ENCODE measurements at regions of chr1 and their contacts with region 1.

Region 1: DNA sequence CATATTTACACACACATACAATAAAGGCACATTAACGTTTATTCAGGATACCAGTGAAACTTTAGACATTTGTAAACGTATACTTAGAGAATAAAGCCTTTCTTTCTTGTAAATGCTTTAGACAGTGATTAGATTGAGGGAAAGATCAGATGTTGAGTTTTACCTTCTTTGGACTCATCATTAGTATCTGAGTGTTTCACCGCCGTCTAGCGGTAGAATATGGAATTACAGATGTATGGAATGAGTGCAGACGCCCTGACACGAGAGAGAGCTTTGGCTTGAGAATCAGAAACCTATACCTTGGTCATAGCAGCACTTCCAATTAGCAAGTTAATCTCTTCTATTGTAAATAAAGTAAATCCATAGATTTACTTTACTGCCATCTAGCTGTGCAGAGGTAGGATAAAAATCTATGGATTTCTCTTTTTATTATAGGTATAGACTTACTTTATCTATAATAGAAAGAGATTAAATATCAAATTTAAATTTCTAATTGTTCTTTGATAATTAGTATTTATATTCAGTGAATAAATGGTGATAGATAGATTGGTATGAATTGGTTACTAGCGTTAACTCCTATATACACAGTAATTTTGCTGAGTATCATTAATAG is 12.6 kb downstream of the FLG2 start:
- DNase-seq: peak; percentile 60
- ATAC-seq: peak; percentile 73
- H3K4me3 Mint-ChIP-seq: no peak overlapping the region
- H3K27ac Mint-ChIP-seq: no peak overlapping the region
- H3K4me1 Mint-ChIP-seq: peaks cover 7% of the 10 kb centered on the region
- H3K27me3 Mint-ChIP-seq: peaks cover 22% of the 10 kb centered on the region

Region 2: DNA sequence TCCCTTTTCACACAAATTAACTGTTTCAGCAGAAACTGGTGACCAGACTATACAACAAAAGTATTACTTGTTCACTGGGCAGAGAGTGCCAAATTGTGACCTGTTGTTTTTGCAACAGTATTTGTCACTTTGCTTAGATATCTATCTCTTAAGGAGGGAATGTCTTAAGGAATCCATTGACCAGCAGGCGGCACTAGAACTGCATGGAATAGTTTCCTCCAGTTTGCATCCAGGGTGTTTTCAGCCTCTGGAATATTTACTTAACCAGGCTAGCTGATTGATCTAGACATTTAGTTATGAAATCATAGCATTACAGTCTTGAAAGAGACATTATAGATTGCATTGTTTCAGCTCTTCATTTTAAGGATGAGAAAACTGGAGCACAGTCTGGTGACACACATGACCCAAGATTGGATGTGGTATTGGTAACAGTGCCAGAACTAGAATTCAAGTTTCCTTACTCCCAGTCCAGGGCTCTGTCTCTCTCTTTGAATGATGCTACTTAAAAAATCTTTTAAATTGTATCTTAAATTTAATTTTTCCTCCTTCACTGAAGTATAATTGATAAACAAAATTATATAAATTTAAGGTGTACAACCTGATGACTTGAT is 205.1 kb before region 1 on chr1:
- CTCF ChIA-PET with region 1: no interaction called
- POLR2A ChIA-PET with region 1: no interaction called
- intact Hi-C with region 1: loop called in 1 of 2 experiments (anchors 5 kb)
- DNase-seq: peak; percentile 55
- ATAC-seq: no peak
- H3K4me3 Mint-ChIP-seq: no peak overlapping the region
- H3K27ac Mint-ChIP-seq: no peak overlapping the region
- H3K4me1 Mint-ChIP-seq: peaks cover 11% of the 10 kb centered on the region
- H3K27me3 Mint-ChIP-seq: peaks cover 50% of the 10 kb centered on the region

Region 3: GRCh38 chr1:152335399-152335798 is 11.8 kb before region 1 on chr1:
- CTCF ChIA-PET with region 1: interaction called, 13 read pairs
- POLR2A ChIA-PET with region 1: no interaction called
- intact Hi-C with region 1: no loop called
- DNase-seq: no peak
- ATAC-seq: no peak
- H3K4me3 Mint-ChIP-seq: no peak overlapping the region
- H3K27ac Mint-ChIP-seq: no peak overlapping the region
- H3K4me1 Mint-ChIP-seq: no peaks in the 10 kb centered on the region
- H3K27me3 Mint-ChIP-seq: peaks cover 19% of the 10 kb centered on the region

Region 4: GRCh38 chr1:152440635-152441471 is 93.6 kb after region 1 on chr1:
- CTCF ChIA-PET with region 1: interaction called, 8 read pairs
- POLR2A ChIA-PET with region 1: no interaction called
- intact Hi-C with region 1: loop called in 1 of 2 experiments (anchors 2 kb)
- DNase-seq: peak; percentile 81
- ATAC-seq: peak; percentile 99
- H3K4me3 Mint-ChIP-seq: no peak overlapping the region
- H3K27ac Mint-ChIP-seq: no peak overlapping the region
- H3K4me1 Mint-ChIP-seq: no peaks in the 10 kb centered on the region
- H3K27me3 Mint-ChIP-seq: peaks cover 19% of the 10 kb centered on the region